ENCODE measurements at regions of chr1 and their contacts with region 1.

Region 1: DNA sequence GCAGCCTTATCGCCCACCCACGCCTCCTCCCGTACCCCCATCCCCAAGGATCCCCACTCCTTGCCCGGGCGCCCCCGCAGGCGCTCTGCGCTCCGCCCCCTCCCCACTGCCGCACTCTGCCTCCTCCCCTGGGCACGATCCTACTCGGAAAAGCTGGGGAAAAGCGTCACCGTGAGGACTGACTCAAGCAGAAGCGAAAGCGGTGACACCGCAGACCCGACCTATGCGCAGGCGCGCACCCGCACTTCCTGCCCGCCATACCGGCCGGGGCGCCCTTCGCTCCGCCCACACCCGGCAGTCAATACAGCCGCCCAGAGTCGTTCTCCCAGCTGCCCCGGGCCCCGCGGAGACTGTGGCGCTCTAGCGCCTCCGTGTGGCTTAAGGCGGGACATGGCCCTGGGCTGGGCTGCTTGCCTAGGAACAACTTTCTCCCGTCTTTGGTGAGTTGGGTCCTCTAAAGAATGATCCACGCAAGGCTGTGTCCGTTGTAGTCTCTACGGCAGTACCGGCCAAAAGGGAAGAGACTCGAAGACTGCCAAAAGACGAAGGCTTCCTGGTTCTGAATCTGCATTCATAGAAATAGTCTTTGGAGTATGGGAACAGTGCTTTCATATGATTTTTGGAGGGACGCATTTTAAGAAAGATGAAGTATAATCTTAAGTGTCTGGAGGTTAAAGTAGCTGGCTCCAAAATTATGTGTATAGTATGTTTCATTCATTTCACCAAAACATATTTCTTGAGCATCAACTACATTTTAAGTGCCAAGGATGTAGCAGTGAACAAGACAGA is at the start of gene OMA1:
- ATAC-seq: peak; percentile 87 to 96 (median 92)
- H3K4me3 ChIP-seq: peak within 1 kb of the TSS; percentile 52 to 72 (median 58)
- H3K27ac ChIP-seq: peak within 1 kb of the TSS; percentile 86 to 89
- H3K4me1 ChIP-seq: peaks cover 5 to 8% of the 10 kb centered on the region in 2 donors
- total RNA-seq, gene OMA1: 9.5 to 20.9 (median 12.0) TPM

Region 2: DNA sequence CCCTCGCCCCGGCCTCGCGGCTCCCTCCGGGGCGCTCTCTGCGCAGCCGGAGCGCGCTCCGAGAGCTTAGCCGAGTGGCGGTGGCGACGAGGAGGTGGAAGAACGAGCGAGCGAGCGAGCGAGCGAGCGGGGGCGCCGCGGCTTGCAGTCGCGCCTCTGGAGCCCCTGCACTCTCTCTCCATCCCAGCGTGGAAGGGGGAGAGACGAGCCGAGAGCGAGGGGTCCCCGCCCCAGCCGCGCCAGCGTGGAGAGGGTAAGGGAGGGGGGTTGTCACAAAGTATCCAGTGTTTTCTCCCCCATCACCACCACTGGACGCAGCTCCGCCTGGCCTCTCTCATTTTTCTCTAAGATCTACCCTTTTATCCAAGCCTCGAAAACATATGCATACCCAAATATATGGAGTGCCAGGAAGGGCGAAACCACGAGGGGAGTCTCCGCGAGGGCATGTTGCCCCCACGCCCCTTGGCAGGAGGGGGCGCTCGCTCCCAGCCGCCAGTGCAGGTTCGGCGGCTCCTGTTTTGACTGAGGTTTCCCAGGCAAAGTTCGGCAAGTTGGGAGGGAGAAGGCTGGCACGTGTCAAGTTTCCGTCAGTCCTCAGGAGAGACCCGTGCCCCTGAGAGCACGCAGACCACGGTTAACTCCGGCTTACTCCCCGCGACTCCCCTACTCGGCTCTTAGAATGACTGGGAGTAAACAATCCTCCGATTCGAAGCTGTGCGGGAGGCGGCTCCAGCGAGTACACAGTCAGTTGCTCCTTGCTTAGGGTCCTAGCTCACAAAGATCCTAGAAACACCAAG is 1122.3 kb before region 1 on chr1:
- in situ Hi-C with region 1: loop called in 1 of 9 experiments (anchors 25 kb)
- ATAC-seq: peak; percentile 52 to 71 (median 55)
- H3K4me3 ChIP-seq: peak overlapping the region; percentile 41 to 86 (median 60)
- H3K27ac ChIP-seq: peak overlapping the region; percentile 47 to 73
- H3K4me1 ChIP-seq: peaks cover 2 to 10% of the 10 kb centered on the region in 2 donors

Region 3: DNA sequence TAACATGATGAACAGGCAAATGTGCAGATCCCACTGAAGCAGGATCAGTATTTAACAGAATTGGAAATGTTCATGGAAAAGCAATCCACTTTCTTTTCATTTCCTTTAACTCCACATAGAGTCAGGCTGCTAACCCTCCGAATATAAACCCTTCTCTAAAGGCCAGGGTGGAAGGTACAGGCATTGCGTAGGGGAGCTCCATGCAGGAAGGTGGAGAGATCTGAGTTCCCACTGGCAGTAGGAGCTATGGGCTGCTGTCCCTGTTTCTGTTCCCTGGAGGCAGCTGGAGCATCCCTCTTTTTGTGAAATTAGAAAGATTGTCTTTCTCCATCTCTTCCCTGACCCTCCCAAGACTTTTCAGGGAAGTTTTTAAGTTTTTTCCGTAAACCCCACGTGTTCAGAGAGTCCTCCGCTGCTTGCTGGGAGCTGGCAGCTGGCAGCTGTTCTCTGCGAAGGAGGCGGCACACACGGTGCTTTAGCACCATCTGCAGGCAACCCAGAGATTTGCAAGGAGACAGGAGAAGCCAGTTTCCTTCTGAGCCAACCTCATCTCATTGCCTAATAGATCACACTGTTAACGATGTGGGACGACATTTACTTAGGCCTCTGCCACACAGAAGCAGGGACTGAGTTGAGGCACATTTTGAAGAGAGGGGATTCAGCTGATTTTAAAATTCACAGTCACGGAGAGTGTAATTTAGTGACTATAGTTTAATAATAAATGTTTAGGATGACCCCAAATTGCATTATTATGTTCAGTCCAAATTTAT is 1212.6 kb after region 1 on chr1:
- in situ Hi-C with region 1: loop called in 1 of 9 experiments (anchors 25 kb)
- ATAC-seq: peak; percentile 90 to 94 (median 92)
- H3K4me3 ChIP-seq: no peak overlapping the region
- H3K27ac ChIP-seq: no peak overlapping the region
- H3K4me1 ChIP-seq: peaks cover 8% of the 10 kb centered on the region in 2 donors